GM12878 (cell line): ENCODE measurements at regions of chr2 and their contacts with region 1.

Region 1: GRCh38 chr2:219073413-219074129 is 12.8 kb upstream of the IHH start:
- DNase-seq: no peak
- ATAC-seq: peak; percentile 74
- H3K4me3 ChIP-seq: no peak overlapping the region
- H3K27ac ChIP-seq: no peak overlapping the region
- H3K4me1 ChIP-seq: no peaks in the 10 kb centered on the region
- H3K27me3 ChIP-seq: no peaks in the 10 kb centered on the region
- CTCF ChIP-seq: peak; percentile 48 to 62 (median 58)
- EP300 ChIP-seq: no peak
- POLR2A ChIP-seq: no peak
- RAD21 ChIP-seq: peak; percentile 59

Region 2: GRCh38 chr2:219087361-219087760 is 13.8 kb after region 1 on chr2:
- CTCF ChIA-PET with region 1: interaction called, 58 read pairs
- POLR2A ChIA-PET with region 1: no interaction called
- RAD21 ChIA-PET with region 1: interaction called, 3 read pairs
- SMC1A ChIA-PET with region 1: interaction called, 20 read pairs
- in situ Hi-C with region 1: no loop called
- intact Hi-C with region 1: no loop called
- DNase-seq: no peak
- ATAC-seq: no peak
- H3K4me3 ChIP-seq: no peak overlapping the region
- H3K27ac ChIP-seq: no peak overlapping the region; the same call in 1 of the 2 replicates
- H3K4me1 ChIP-seq: peaks cover 14% of the 10 kb centered on the region
- H3K27me3 ChIP-seq: no peaks in the 10 kb centered on the region
- CTCF ChIP-seq: no peak
- EP300 ChIP-seq: no peak
- POLR2A ChIP-seq: no peak
- RAD21 ChIP-seq: no peak

Region 3: DNA sequence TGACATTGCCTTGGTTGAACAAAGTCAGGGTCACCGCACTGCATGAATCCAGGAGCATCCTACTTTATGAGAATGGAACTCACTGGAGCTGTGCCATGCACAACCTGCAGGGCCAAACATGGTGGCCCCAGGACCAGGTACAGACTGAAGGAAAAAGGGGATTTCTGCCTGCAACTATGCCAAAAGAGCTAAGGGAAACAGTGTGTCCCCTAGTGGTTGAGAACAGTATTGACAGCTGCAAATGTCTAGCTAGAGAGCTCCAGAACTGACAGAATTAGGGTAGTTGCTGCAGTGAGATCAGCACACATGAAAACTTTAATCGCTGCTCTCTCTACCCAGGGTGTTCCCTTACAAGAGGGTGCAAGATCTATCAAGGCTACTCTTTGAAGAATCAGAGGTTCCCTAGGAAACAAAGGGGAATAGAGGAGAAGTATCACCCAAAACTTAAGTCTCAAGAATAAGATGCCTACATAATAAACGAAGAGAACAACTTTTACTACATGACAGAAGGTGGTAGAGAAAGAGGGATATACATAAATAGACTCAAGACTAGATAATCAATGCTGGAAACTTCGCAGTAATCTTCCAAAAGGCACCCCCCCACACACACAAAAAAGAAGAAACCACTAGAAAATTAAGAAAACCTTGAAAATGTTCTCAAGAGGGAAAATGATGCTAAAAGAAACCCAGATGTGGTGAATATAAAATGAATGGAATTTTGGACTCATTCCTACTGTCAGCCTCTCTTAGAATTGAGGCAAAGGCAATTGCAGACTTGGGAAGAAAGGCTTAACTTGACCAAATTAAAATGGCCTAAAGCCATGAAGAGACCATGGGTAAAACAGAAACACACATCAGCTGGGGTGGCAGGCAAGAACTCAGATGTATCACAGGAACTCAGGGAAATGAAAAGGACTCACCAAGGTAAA is 30.8 kb after region 1 on chr2:
- CTCF ChIA-PET with region 1: interaction called, 365 read pairs
- POLR2A ChIA-PET with region 1: no interaction called
- RAD21 ChIA-PET with region 1: interaction called, 56 read pairs
- SMC1A ChIA-PET with region 1: interaction called, 57 read pairs
- in situ Hi-C with region 1: no loop called
- intact Hi-C with region 1: no loop called
- DNase-seq: no peak
- ATAC-seq: peak; percentile 97
- H3K4me3 ChIP-seq: no peak overlapping the region
- H3K27ac ChIP-seq: no peak overlapping the region
- H3K4me1 ChIP-seq: no peaks in the 10 kb centered on the region
- H3K27me3 ChIP-seq: no peaks in the 10 kb centered on the region
- CTCF ChIP-seq: peak; percentile 70 to 95 (median 90)
- EP300 ChIP-seq: no peak
- POLR2A ChIP-seq: no peak
- RAD21 ChIP-seq: peak; percentile 54

Region 4: GRCh38 chr2:219133976-219134375 is 60.4 kb after region 1 on chr2:
- CTCF ChIA-PET with region 1: interaction called, 11 read pairs
- POLR2A ChIA-PET with region 1: no interaction called
- RAD21 ChIA-PET with region 1: no interaction called
- SMC1A ChIA-PET with region 1: interaction called, 6 read pairs
- in situ Hi-C with region 1: no loop called
- intact Hi-C with region 1: no loop called
- DNase-seq: no peak
- ATAC-seq: no peak
- H3K4me3 ChIP-seq: no peak overlapping the region
- H3K27ac ChIP-seq: no peak overlapping the region
- H3K4me1 ChIP-seq: no peaks in the 10 kb centered on the region
- H3K27me3 ChIP-seq: no peaks in the 10 kb centered on the region
- CTCF ChIP-seq: no peak
- EP300 ChIP-seq: no peak
- POLR2A ChIP-seq: no peak
- RAD21 ChIP-seq: no peak

Region 5: GRCh38 chr2:219352448-219353023 is 279.0 kb after region 1 on chr2:
- CTCF ChIA-PET with region 1: no interaction called
- POLR2A ChIA-PET with region 1: no interaction called
- RAD21 ChIA-PET with region 1: no interaction called
- SMC1A ChIA-PET with region 1: no interaction called
- in situ Hi-C with region 1: no loop called
- intact Hi-C with region 1: no loop called
- DNase-seq: no peak
- ATAC-seq: peak; percentile 97
- H3K4me3 ChIP-seq: no peak overlapping the region
- H3K27ac ChIP-seq: no peak overlapping the region
- H3K4me1 ChIP-seq: no peaks in the 10 kb centered on the region
- H3K27me3 ChIP-seq: peaks cover 0 to 2% of the 10 kb centered on the region in 2 experiments; a peak in 2 of 4 replicates
- CTCF ChIP-seq: peak; percentile 55 to 80 (median 73)
- EP300 ChIP-seq: no peak
- POLR2A ChIP-seq: no peak
- RAD21 ChIP-seq: peak; percentile 64